Dendritic cell treated with granulocyte-macrophage colony-stimulating factor and Interleukin-4, amounts not matched to agents 40 ng/mL and 50 ng/mL, for 4 days (primary cell): ENCODE measurements at regions of chr15 and their contacts with region 1.

Region 1: DNA sequence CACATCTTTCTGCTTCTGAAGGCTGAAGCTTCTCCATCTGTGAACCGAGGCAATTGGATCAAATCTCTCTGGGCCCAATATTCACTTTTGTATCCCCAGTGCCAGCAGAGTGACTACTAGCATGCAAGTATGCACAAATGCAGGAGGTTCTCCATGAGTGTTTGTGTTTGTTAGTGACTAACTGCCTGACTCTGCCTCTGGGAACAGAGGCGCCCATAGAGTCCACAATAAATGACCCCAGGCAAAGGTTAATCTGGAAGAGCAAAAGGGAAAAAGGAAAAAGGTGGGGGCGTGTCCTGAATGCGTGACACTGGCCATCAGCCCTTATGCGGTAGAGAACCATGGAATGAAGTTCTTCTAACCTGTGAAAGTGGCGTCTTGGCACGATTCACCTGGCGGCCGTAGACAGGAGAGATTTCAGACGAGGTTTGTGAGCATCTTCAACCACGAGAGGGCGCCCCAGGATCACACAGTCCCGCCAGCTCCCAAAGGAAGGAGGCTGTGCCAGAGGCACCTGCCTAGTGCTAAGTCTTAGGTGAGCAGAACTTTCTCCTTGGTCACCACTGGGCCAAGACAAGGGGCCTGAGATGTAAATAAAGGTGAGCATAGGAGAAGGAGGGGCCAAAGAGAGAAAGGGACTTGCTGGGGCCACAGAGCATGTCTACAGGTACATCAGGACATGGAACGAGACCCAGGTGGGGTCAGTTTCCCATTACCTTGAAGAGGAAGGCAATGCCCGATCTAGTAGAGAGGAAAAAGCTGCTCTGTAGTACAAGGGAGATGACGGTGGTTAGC is 44.2 kb downstream of the RBPMS2 start:
- H3K4me3 Mint-ChIP-seq: no peak overlapping the region
- H3K27ac Mint-ChIP-seq: no peak overlapping the region
- H3K4me1 Mint-ChIP-seq: peaks cover 12% of the 10 kb centered on the region
- H3K27me3 Mint-ChIP-seq: peaks cover 8% of the 10 kb centered on the region

Region 2: DNA sequence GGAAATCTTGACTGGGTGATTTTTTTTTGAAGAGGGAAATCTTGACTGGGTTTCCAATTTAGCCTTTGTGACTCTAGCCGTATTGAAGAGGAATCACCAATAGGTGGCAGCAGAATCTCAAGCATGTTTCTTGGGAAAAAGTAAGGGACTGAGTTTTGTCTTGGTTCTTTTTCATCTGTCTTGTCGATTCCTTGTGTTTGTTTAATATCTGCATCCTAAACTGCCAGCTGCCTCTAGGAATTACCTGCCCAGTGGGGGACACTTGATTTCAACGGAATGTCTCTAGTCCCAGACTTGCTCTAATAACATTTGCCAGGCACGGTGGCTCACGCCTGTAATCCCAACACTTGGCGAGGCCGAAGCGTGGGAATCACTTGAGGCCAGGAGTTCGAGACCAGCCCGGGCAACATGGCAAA is 45.0 kb before region 1 on chr15:
- intact Hi-C with region 1: loop called (anchors 1 kb)
- H3K4me3 Mint-ChIP-seq: no peak overlapping the region
- H3K27ac Mint-ChIP-seq: no peak overlapping the region
- H3K4me1 Mint-ChIP-seq: peaks cover 26% of the 10 kb centered on the region
- H3K27me3 Mint-ChIP-seq: no peaks in the 10 kb centered on the region

Region 3: DNA sequence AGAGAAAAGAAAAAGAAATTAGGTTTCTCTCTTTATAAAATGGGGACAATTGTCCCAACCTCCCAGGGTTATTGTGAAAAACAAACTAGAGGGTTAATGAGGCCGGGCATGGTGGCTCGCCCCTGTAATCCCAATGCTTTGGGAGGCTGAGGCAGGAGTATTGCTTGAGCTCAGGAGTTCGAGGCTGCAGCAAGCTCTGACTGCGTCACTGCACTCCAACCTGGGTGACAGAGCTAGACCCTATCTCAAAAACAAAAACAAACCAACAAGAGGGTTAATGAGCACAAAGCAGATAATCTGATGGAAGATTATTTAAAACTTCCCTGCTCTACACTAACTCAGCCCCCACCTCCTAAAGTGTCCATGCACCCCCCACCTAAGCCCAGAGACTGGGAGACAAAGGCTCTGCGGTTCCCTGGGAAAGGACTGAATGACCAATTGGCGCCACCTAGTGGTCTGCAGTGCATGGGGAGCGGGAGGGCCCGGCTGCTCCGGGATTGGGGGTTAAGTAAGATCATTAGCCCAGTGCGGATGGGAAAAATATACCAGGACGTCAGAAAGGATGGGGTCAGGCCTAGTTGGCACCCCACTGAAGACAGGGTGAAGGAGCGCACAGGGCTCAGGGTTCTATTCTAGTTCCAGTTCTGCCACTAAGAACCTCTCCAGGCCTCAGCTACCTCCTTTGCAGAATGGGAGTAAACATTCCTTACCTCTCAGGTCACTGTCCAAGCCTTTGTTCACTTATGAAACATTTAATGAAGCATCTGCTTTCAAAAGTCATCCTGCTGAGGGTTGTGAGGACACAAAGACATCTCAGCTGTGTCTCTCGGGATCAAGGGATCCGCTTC is 78.7 kb after region 1 on chr15:
- intact Hi-C with region 1: loop called (anchors 1 kb)
- H3K4me3 Mint-ChIP-seq: no peak overlapping the region
- H3K27ac Mint-ChIP-seq: no peak overlapping the region
- H3K4me1 Mint-ChIP-seq: peaks cover 18% of the 10 kb centered on the region
- H3K27me3 Mint-ChIP-seq: peaks cover 24% of the 10 kb centered on the region

Region 4: DNA sequence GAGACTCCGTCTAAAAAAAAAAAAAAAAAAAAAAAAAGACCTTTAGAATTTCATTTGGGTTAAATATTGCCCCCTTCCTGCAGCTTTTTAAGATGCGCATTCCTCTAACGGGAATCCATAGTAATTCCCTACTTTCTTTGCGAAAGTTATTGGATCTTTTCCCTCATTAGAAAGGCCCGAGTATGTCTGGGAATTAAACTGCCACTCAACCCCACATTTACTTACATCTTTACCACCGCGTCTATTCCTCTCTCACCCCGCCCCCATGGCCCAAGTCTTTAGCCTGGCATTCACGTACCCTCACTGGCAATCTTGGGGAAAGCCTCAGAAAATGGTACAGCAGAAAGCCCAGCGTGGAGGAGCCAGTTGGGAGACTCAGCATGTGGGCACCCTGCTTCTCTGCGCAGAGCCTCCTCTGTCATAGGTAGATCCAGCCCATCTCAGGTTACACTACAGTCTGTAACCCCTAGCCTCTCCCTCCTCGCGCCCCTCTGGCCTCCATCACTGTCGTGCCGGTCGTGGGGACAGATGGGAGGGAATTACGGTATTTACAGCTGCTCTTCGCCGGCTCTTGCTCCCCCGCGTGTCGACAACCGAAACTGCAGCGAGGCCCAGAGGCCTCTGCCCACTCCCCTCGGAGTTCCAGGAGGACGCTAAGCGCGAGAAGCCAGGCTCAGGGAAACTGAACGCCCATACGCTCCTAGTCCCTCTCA is 174.1 kb after region 1 on chr15:
- intact Hi-C with region 1: loop called (anchors 5 kb)
- H3K4me3 Mint-ChIP-seq: peak overlapping the region; percentile 61
- H3K27ac Mint-ChIP-seq: peak overlapping the region; percentile 73
- H3K4me1 Mint-ChIP-seq: peaks cover 34% of the 10 kb centered on the region
- H3K27me3 Mint-ChIP-seq: peaks cover 12% of the 10 kb centered on the region

Region 5: GRCh38 chr15:65008983-65009382 is 277.8 kb after region 1 on chr15:
- intact Hi-C with region 1: loop called (anchors 5 kb)
- H3K4me3 Mint-ChIP-seq: no peak overlapping the region
- H3K27ac Mint-ChIP-seq: no peak overlapping the region
- H3K4me1 Mint-ChIP-seq: peaks cover 16% of the 10 kb centered on the region
- H3K27me3 Mint-ChIP-seq: no peaks in the 10 kb centered on the region

Region 6: GRCh38 chr15:65028921-65029735 is 297.9 kb after region 1 on chr15 and contains the start of gene MTFMT:
- intact Hi-C with region 1: loop called (anchors 5 kb)
- H3K4me3 Mint-ChIP-seq: peak within 1 kb of the TSS; percentile 86
- H3K27ac Mint-ChIP-seq: peak within 1 kb of the TSS; percentile 80
- H3K4me1 Mint-ChIP-seq: peaks cover 44% of the 10 kb centered on the region
- H3K27me3 Mint-ChIP-seq: peaks cover 19% of the 10 kb centered on the region

Region 7: DNA sequence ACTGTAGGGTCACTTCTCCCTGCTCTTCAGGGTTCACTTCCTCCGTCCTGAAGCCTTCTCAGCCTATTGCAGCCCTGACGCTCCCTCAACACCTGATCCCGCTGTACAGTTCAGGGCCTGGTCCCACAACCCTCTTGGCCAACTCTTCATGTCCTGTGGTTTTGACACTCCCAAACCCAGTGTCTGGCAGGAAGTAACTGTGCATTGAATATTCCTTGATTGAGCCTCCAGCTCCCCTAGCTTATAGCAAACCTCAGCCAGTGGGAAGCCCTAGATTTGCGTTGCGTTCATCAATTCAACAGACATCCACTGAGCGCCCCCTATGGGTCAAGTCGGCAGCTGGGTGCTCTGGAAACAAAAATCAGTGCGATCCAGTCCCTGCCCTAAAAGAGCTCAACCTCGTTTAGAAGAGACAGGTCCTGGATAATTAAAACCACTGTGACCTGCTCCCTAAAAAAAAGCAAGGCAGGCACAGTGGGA is 370.2 kb after region 1 on chr15:
- intact Hi-C with region 1: loop called (anchors 5 kb)
- H3K4me3 Mint-ChIP-seq: peak overlapping the region; percentile 52
- H3K27ac Mint-ChIP-seq: peak overlapping the region; percentile 84
- H3K4me1 Mint-ChIP-seq: peaks cover 16% of the 10 kb centered on the region
- H3K27me3 Mint-ChIP-seq: no peaks in the 10 kb centered on the region